Heart right ventricle (tissue), 16 donors: ENCODE measurements at regions of chr15 and their contacts with region 1.

Region 1: DNA sequence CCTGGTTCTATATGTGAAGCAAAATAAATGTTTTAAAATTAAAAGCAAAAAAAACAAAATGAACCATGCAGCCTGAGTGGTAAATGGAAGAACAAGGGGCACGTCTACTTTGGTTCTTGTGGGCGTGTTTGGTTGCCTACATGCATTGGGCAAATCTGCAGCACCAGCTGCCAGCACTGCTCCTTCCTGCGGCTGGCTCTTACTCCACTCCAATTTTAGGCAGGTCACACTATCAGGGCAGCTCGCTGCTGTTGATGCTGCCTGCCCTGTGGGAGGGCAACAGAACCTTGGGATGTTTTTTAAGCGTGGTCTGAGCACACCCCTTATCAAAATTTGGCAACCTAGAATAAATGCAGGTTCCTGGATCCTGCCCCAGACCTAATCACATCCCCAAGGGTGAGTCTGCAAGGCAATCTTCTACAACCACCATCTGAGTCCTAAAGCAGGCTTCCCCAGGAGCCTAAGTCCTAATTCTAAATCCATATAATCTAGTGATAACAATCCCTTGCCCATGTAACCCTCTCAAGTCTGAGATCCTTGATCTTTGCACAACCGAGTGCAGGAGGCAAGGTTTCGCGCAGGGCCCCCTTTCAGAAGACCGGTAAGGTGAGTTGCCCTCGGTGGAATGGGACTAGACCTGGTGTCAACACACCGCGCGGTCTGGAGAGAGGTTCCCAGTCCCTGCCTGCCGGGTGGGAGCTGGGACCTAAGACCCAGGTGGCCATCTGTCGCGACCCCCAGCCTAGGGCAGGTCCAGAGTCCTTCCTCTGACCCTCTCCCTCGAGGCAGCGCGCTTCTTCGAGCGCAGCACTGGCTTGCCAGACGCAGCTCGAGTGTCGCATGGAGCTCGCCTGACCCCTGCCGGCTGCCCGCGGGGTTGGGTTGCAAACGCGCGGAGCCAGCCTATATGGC is 15.9 kb downstream of the IVD start:
- DNase-seq: peak; percentile 76 to 84
- ATAC-seq: peak; percentile 84 to 93 (median 90)
- H3K4me3 ChIP-seq: no peak overlapping the region
- H3K27ac ChIP-seq: peak overlapping the region in 9 of 10 donors; percentile 52 to 82 (median 64)
- H3K4me1 ChIP-seq: peaks cover 6 to 26% (median 23%) of the 10 kb centered on the region in 9 donors
- H3K27me3 ChIP-seq: no peaks in the 10 kb centered on the region
- CTCF ChIP-seq: peak; percentile 88 to 96 (median 95)

Region 2: DNA sequence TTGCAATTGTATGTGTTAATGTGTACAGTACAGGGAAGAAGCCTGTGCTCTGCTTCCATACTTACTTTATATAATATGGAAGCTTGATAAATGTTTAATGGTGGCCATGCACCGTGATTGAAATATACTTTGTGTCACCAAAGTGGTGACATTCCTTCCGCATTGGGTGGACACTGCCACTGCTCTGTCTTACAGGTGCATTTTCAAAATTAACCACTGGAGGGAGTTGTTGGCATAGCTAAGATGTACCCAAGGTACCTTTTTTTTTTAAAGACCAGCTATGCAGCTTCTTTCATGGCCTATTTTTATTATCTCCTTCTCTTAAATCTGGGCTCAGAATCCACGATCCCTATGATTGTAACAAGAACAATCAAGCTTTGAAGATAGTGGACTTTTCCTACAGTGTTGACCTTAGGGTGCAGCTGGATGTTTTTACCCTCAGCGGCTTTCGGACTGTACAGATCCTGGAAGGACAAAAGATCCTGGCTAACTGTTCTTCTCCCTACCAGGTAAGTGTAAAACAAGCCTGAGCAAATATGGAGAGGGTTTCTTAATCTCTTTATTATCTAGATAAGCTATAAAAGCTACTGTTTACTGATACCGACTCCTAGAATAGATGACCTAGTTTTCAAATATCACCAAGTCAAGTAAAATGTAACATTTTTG is 204.2 kb before region 1 on chr15:
- intact Hi-C with region 1: loop called in 1 of 10 experiments (anchors 5 kb)
- DNase-seq: peak in 1 of 2 donors; percentile 67
- ATAC-seq: peak; percentile 80 to 92 (median 82)
- H3K4me3 ChIP-seq: no peak overlapping the region
- H3K27ac ChIP-seq: no peak overlapping the region
- H3K4me1 ChIP-seq: no peaks in the 10 kb centered on the region
- H3K27me3 ChIP-seq: no peaks in the 10 kb centered on the region
- CTCF ChIP-seq: peak; percentile 68 to 92 (median 87)

Region 3: GRCh38 chr15:40310001-40310959 is 111.2 kb before region 1 on chr15:
- intact Hi-C with region 1: loop called in 2 of 10 experiments (anchors 5 to 10 kb)
- DNase-seq: peak; percentile 63 to 68
- ATAC-seq: peak; percentile 40 to 82 (median 74)
- H3K4me3 ChIP-seq: no peak overlapping the region
- H3K27ac ChIP-seq: no peak overlapping the region
- H3K4me1 ChIP-seq: peaks cover 0 to 45% (median 7%) of the 10 kb centered on the region in 9 donors
- H3K27me3 ChIP-seq: peaks cover 0 to 3% (median 0%) of the 10 kb centered on the region in 7 donors
- CTCF ChIP-seq: peak; percentile 47 to 86 (median 80)

Region 4: GRCh38 chr15:40344631-40345120 is 76.8 kb before region 1 on chr15:
- intact Hi-C with region 1: loop called in 6 of 10 experiments (anchors 2 to 5 kb)
- DNase-seq: peak; percentile 61 to 68
- ATAC-seq: peak in 1 of 8 donors; percentile 18
- H3K4me3 ChIP-seq: no peak overlapping the region
- H3K27ac ChIP-seq: peak overlapping the region in 5 of 10 donors; percentile 9 to 99 (median 72)
- H3K4me1 ChIP-seq: peaks cover 24 to 64% (median 50%) of the 10 kb centered on the region in 9 donors
- H3K27me3 ChIP-seq: no peaks in the 10 kb centered on the region
- CTCF ChIP-seq: peak; percentile 58 to 85 (median 82)

Region 5: DNA sequence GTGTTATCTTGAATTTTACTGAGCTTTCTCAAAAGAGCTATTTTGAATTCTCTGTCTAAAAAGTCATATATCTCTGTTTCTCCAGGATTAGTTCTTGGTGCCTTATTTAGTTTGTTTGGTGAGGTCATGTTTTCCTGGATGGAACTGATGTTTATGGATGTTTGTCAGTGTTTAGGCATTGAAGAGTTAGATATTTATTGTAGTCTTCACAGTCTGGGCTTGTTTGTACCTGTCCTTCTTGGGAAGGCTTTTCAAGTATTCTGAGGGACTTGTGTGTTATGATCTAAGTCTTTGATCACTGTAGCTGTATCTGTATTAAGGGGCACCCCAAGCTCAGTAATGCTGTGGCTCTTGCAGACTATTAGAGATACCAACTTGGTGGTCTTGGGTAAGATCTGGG is 262.9 kb after region 1 on chr15:
- intact Hi-C with region 1: no loop called
- DNase-seq: no peak
- ATAC-seq: no peak
- H3K4me3 ChIP-seq: no peak overlapping the region
- H3K27ac ChIP-seq: no peak overlapping the region
- H3K4me1 ChIP-seq: peaks cover 0 to 1% (median 0%) of the 10 kb centered on the region in 9 donors
- H3K27me3 ChIP-seq: no peaks in the 10 kb centered on the region
- CTCF ChIP-seq: no peak